Prostate gland (tissue), 2 donors: ENCODE measurements at regions of chr6 and their contacts with region 1.

Region 1: GRCh38 chr6:31396422-31397152 is 6.8 kb upstream of the MICA start:
- DNase-seq: peak; percentile 77
- H3K4me3 ChIP-seq: no peak overlapping the region
- H3K27ac ChIP-seq: peak overlapping the region in 1 of 2 donors; percentile 5
- H3K4me1 ChIP-seq: no peaks in the 10 kb centered on the region
- H3K27me3 ChIP-seq: no peaks in the 10 kb centered on the region
- CTCF ChIP-seq: peak; percentile 55 to 87 (median 80)
- POLR2A ChIP-seq: no peak

Region 2: GRCh38 chr6:31007694-31008093 is 388.9 kb before region 1 on chr6:
- intact Hi-C with region 1: no loop called
- DNase-seq: no peak
- H3K4me3 ChIP-seq: no peak overlapping the region
- H3K27ac ChIP-seq: no peak overlapping the region
- H3K4me1 ChIP-seq: no peaks in the 10 kb centered on the region
- H3K27me3 ChIP-seq: no peaks in the 10 kb centered on the region
- CTCF ChIP-seq: no peak
- POLR2A ChIP-seq: no peak

Region 3: GRCh38 chr6:31197559-31198305 is 198.9 kb before region 1 on chr6:
- intact Hi-C with region 1: no loop called
- DNase-seq: peak; percentile 90
- H3K4me3 ChIP-seq: peak overlapping the region; percentile 67 to 68
- H3K27ac ChIP-seq: peak overlapping the region; percentile 94 to 95
- H3K4me1 ChIP-seq: no peaks in the 10 kb centered on the region
- H3K27me3 ChIP-seq: no peaks in the 10 kb centered on the region
- CTCF ChIP-seq: peak in 1 of 4 experiments; percentile 27
- POLR2A ChIP-seq: peak; percentile 71

Region 4: DNA sequence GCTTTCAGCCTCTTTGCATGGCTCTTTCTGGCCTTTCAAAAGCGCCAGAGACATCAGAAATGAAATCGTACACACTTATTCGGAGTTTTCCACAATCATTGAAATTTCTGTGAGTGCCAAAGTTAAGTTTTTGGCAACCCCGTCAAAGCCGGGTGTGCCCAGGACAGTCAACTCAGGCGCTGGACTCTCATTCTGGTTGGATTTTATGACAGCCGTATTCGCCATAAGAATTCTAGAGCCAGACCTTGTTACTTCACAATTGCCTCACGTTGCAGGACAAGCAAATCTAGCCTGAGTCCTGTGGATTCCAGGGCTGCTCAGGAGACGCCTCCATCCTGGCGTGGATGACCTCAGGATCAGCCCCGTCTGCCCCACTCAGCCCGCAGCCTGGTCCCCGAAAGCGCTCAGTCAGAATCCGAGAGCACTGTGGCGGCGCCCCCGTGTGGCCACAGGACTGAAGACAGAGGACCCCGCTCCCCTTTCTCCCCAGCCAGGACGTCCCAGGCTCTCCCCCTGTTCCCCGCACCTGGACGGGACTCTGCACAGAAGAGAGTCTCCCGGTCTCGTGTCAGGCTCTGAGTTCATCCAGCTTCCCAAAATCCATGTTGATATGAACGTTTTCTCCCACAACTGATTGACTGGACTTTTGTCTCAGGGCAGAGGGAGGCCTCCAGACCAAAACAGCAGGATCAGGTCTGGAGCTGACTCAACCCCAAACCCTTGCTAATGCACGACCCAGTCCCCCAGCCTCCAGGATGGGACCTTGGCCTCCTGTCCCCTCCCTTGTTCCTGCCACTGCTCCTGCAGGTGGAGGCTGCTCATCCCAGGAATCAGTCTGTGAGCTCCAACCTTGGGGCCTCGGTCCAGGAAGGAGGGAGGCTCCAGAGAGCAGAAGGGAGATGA is 45.0 kb after region 1 on chr6:
- intact Hi-C with region 1: loop called (anchors 1 kb)
- DNase-seq: peak; percentile 72
- H3K4me3 ChIP-seq: no peak overlapping the region
- H3K27ac ChIP-seq: no peak overlapping the region
- H3K4me1 ChIP-seq: no peaks in the 10 kb centered on the region
- H3K27me3 ChIP-seq: no peaks in the 10 kb centered on the region
- CTCF ChIP-seq: peak; percentile 66 to 86 (median 82)
- POLR2A ChIP-seq: no peak